ENCODE measurements at regions of chr4 and their contacts with region 1.

Region 1: GRCh38 chr4:12933760-12934221 is 550.3 kb downstream of the RAB28 start:
- DNase-seq: no peak
- ATAC-seq: no peak
- H3K4me3 ChIP-seq: no peak overlapping the region
- H3K27ac ChIP-seq: no peak overlapping the region
- H3K4me1 ChIP-seq: no peaks in the 10 kb centered on the region
- H3K27me3 ChIP-seq: no peaks in the 10 kb centered on the region
- CTCF ChIP-seq: no peak
- POLR2A ChIP-seq: no peak

Region 2: GRCh38 chr4:12957108-12957507 is 23.3 kb after region 1 on chr4:
- intact Hi-C with region 1: loop called in 1 of 10 experiments (anchors 1 kb)
- DNase-seq: no peak
- ATAC-seq: no peak
- H3K4me3 ChIP-seq: no peak overlapping the region
- H3K27ac ChIP-seq: no peak overlapping the region
- H3K4me1 ChIP-seq: no peaks in the 10 kb centered on the region
- H3K27me3 ChIP-seq: no peaks in the 10 kb centered on the region
- CTCF ChIP-seq: no peak
- POLR2A ChIP-seq: no peak

Region 3: DNA sequence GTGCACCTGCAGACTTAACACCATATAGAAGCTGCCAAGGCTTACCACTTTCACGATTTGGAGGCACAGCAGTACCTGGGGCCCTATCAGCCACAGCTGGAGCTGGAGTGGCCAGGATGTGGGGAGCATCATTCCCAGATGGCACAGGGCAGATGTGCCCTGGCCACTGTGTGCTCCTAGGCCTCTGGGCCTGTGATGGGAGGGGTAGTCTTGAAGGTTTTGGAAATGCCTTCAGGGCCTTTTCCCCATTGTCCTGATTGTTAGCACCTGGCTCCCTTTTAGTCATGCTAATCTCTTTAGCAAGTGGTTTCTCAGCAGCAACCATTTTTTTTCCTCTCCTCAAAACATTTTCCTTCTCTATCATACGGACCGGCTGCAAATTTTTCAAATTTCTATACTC is 60.1 kb after region 1 on chr4:
- intact Hi-C with region 1: no loop called
- DNase-seq: no peak
- ATAC-seq: no peak
- H3K4me3 ChIP-seq: no peak overlapping the region
- H3K27ac ChIP-seq: no peak overlapping the region
- H3K4me1 ChIP-seq: no peaks in the 10 kb centered on the region
- H3K27me3 ChIP-seq: no peaks in the 10 kb centered on the region
- CTCF ChIP-seq: no peak
- POLR2A ChIP-seq: no peak

Region 4: GRCh38 chr4:13821522-13821921 is 887.7 kb after region 1 on chr4:
- intact Hi-C with region 1: no loop called
- DNase-seq: no peak
- ATAC-seq: no peak
- H3K4me3 ChIP-seq: no peak overlapping the region
- H3K27ac ChIP-seq: no peak overlapping the region
- H3K4me1 ChIP-seq: peaks cover 0 to 5% (median 0%) of the 10 kb centered on the region in 12 donors
- H3K27me3 ChIP-seq: no peaks in the 10 kb centered on the region
- CTCF ChIP-seq: no peak
- POLR2A ChIP-seq: no peak

Measured in heart left ventricle (tissue), 16 donors.